ENCODE measurements at regions of chr7 and their contacts with region 1.

Region 1: GRCh38 chr7:112495810-112496462 is 15.1 kb downstream of the LSMEM1 start:
- DNase-seq: no peak
- H3K4me3 ChIP-seq: no peak overlapping the region
- H3K27ac ChIP-seq: peak overlapping the region in 1 of 4 donors; percentile 42
- H3K4me1 ChIP-seq: peaks cover 0 to 12% (median 9%) of the 10 kb centered on the region in 3 donors
- H3K27me3 ChIP-seq: no peaks in the 10 kb centered on the region
- CTCF ChIP-seq: peak in 5 of 6 experiments; percentile 61 to 75 (median 65)
- POLR2A ChIP-seq: no peak

Region 2: GRCh38 chr7:111741811-111742240 is 754.1 kb before region 1 on chr7:
- intact Hi-C with region 1: loop called (anchors 10 kb)
- DNase-seq: no peak
- H3K4me3 ChIP-seq: no peak overlapping the region
- H3K27ac ChIP-seq: no peak overlapping the region
- H3K4me1 ChIP-seq: no peaks in the 10 kb centered on the region
- H3K27me3 ChIP-seq: no peaks in the 10 kb centered on the region
- CTCF ChIP-seq: peak in 5 of 6 experiments; percentile 56 to 76 (median 58)
- POLR2A ChIP-seq: no peak

Region 3: GRCh38 chr7:112437043-112437442 is 58.9 kb before region 1 on chr7:
- intact Hi-C with region 1: no loop called
- DNase-seq: no peak
- H3K4me3 ChIP-seq: no peak overlapping the region
- H3K27ac ChIP-seq: no peak overlapping the region
- H3K4me1 ChIP-seq: peaks cover 0 to 6% (median 0%) of the 10 kb centered on the region in 3 donors
- H3K27me3 ChIP-seq: no peaks in the 10 kb centered on the region
- CTCF ChIP-seq: no peak
- POLR2A ChIP-seq: no peak